K562 (cell line): ENCODE measurements at regions of chr6 and their contacts with region 1.

Region 1: GRCh38 chr6:33271458-33272274 is at the starts of genes RPS18 and VPS52:
- DNase-seq: peak; percentile 89 to 100 (median 92)
- ATAC-seq: peak; percentile 85
- H3K4me3 ChIP-seq: peak within 1 kb of the TSS; percentile 93
- H3K27ac ChIP-seq: peak within 1 kb of the TSS; percentile 98
- H3K4me1 ChIP-seq: peaks cover 11 to 38% of the 10 kb centered on the region in 2 experiments
- H3K27me3 ChIP-seq: no peaks in the 10 kb centered on the region; a peak in 1 of 5 replicates
- CTCF ChIP-seq: 0 out of 6 replicates have a peak, but pooled peaks of 1 of the 3 experiments have one; percentile 4
- EP300 ChIP-seq: peak; percentile 68; the same call in 1 of the 2 replicates
- POLR2A ChIP-seq: peak; percentile 100
- RAD21 ChIP-seq: peak in 1 of 2 experiments; percentile 16; a peak in 1 of 4 replicates
- polyA plus RNA-seq, gene RPS18: 14,899 to 17,516 TPM
- polyA plus RNA-seq, gene VPS52: 24.4 to 37.6 TPM

Region 2: GRCh38 chr6:33288921-33289748 is 17.5 kb after region 1 on chr6 and contains the starts of genes PFDN6 and WDR46:
- CTCF ChIA-PET with region 1: no interaction called
- POLR2A ChIA-PET with region 1: interaction called, 90 read pairs
- in situ Hi-C with region 1: no loop called
- intact Hi-C with region 1: no loop called
- DNase-seq: peak; percentile 89 to 97 (median 92)
- ATAC-seq: peak; percentile 97
- H3K4me3 ChIP-seq: peak within 1 kb of the TSS; percentile 76
- H3K27ac ChIP-seq: peak within 1 kb of the TSS; percentile 83
- H3K4me1 ChIP-seq: peaks cover 13 to 24% of the 10 kb centered on the region in 2 experiments; a peak in 4 of 5 replicates
- H3K27me3 ChIP-seq: no peaks in the 10 kb centered on the region
- CTCF ChIP-seq: no peak
- EP300 ChIP-seq: no peak; the same call in 1 of the 2 replicates
- POLR2A ChIP-seq: peak; percentile 89
- RAD21 ChIP-seq: no peak
- polyA plus RNA-seq, gene PFDN6: 6.8 to 8.7 TPM
- polyA plus RNA-seq, gene WDR46: 8.9 to 27.6 TPM

Region 3: DNA sequence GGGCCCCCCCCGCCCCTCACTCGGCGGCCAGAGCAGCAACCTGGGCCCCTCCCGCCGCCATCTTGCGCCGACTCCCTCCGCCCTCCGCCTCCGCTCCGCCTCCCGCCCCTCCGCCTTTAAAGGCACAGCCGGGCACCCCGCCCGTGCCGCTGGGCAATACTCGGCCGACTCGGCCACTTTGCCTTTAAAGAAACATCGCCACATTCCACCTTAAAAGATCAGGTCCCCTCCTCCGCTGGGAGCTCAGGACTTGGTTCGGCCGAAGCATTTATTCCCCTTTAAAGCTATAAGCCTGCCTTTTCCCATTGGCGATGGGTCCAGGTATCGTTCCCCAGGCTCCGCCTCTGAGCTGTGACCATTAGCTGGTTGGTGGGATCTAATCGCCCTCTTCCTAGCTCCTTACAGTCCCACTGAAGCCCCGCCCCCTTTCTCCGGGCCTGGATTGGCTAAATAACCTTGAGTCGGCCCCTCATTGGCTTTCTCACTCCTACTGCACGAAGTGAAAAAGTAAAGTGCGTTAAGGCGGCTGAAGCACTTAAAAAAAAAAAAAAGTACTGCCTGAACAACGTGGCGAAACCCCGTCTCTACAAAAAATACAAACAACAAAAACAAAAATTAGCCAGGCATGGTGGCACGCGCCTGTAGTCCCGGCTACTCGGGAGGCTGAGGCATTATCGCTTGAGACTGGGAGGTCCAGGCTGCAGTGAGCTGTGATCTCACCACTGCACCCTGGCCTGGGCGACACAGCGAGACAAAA is 46.2 kb after region 1 on chr6 and contains the start of gene ZBTB22:
- CTCF ChIA-PET with region 1: no interaction called
- POLR2A ChIA-PET with region 1: interaction called, 8 read pairs
- in situ Hi-C with region 1: no loop called
- intact Hi-C with region 1: loop called (anchors 1 kb)
- DNase-seq: peak; percentile 90 to 100 (median 94)
- ATAC-seq: peak; percentile 82
- H3K4me3 ChIP-seq: peak within 1 kb of the TSS; percentile 63
- H3K27ac ChIP-seq: peak within 1 kb of the TSS; percentile 79
- H3K4me1 ChIP-seq: peaks cover 56 to 76% of the 10 kb centered on the region in 2 experiments
- H3K27me3 ChIP-seq: no peaks in the 10 kb centered on the region
- CTCF ChIP-seq: peak in 1 of 3 experiments; percentile 17; a peak in 1 of 6 replicates
- EP300 ChIP-seq: no peak
- POLR2A ChIP-seq: peak; percentile 72
- RAD21 ChIP-seq: no peak
- polyA plus RNA-seq, gene ZBTB22: 0.21 to 0.30 TPM

Region 4: DNA sequence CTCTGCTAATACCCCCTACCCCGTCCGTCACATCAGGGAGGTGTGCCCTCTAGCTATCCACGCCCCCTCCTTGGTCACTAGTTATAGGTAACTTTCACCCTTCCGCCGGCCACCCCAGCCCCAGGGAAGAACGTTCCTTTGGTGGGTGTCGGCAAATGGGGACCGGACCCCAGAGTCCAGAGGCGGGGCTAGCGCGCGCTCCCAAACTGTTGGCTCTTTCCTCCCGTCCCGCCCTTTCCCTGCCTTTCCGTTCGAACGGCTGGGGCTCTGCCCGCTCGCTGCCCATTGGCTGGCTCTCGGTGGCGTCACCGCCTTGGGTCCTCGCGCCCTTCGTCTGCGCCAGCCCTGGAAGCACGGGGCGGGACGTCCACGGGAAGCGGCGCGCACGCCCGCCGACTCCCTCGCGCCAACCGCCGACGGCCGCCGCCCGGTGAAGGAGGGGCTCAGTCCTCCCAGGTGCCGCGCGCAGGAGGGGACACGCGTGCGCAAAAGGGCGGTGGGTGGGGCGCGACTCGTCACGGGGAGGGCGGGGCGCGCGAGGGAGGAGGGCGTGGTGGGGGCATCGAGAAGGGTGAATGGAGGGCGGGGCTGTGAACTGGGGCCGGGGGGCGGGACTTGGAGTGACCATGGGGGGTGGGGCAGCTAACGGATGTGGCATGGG is 138.5 kb after region 1 on chr6:
- CTCF ChIA-PET with region 1: interaction called, 64 read pairs
- POLR2A ChIA-PET with region 1: interaction called, 8 read pairs
- in situ Hi-C with region 1: loop called (anchors 10 kb)
- intact Hi-C with region 1: loop called (anchors 2 kb)
- DNase-seq: peak; percentile 97 to 99 (median 98)
- ATAC-seq: peak; percentile 96
- H3K4me3 ChIP-seq: peak overlapping the region; percentile 95
- H3K27ac ChIP-seq: peak overlapping the region; percentile 93
- H3K4me1 ChIP-seq: peaks cover 11 to 27% of the 10 kb centered on the region in 2 experiments; a peak in 4 of 5 replicates
- H3K27me3 ChIP-seq: no peaks in the 10 kb centered on the region
- CTCF ChIP-seq: 0 out of 6 replicates have a peak, but pooled peaks of 1 of the 3 experiments have one; percentile 1
- EP300 ChIP-seq: peak; percentile 43
- POLR2A ChIP-seq: peak; percentile 90
- RAD21 ChIP-seq: 0 out of 4 replicates have a peak, but pooled peaks of 1 of the 2 experiments have one; percentile 8

Region 5: GRCh38 chr6:33579828-33580714 is 308.4 kb after region 1 on chr6 and contains the start of gene BAK1:
- CTCF ChIA-PET with region 1: no interaction called
- POLR2A ChIA-PET with region 1: no interaction called
- in situ Hi-C with region 1: no loop called
- intact Hi-C with region 1: loop called (anchors 10 kb)
- DNase-seq: peak; percentile 96 to 98 (median 97)
- ATAC-seq: peak; percentile 98
- H3K4me3 ChIP-seq: peak within 1 kb of the TSS; percentile 97
- H3K27ac ChIP-seq: peak within 1 kb of the TSS; percentile 72
- H3K4me1 ChIP-seq: peaks cover 10 to 40% of the 10 kb centered on the region in 2 experiments; a peak in 4 of 5 replicates
- H3K27me3 ChIP-seq: no peaks in the 10 kb centered on the region
- CTCF ChIP-seq: peak; percentile 76 to 88 (median 81)
- EP300 ChIP-seq: no peak
- POLR2A ChIP-seq: peak; percentile 84
- RAD21 ChIP-seq: peak in 1 of 2 experiments; percentile 51; a peak in 2 of 4 replicates
- polyA plus RNA-seq, gene BAK1: 5.4 to 9.7 TPM